ENCODE measurements at regions of chr6 and their contacts with region 1.

Region 1: GRCh38 chr6:26196846-26197648 is 109.8 kb downstream of the HFE start:
- DNase-seq: peak; percentile 93
- ATAC-seq: peak; percentile 66
- H3K4me3 ChIP-seq: peak overlapping the region; percentile 81 to 90 (median 87)
- H3K27ac ChIP-seq: peak overlapping the region; percentile 94
- H3K4me1 ChIP-seq: peaks cover 30% of the 10 kb centered on the region
- H3K27me3 ChIP-seq: no peaks in the 10 kb centered on the region; a peak in 1 of 5 replicates
- CTCF ChIP-seq: peak; percentile 60
- EP300 ChIP-seq: peak; percentile 34 to 41; a peak in 2 of 4 replicates
- POLR2A ChIP-seq: peak; percentile 99
- RAD21 ChIP-seq: peak; percentile 53

Region 2: GRCh38 chr6:26045065-26045927 is 151.8 kb before region 1 on chr6:
- CTCF ChIA-PET with region 1: no interaction called
- POLR2A ChIA-PET with region 1: interaction called, 110 read pairs
- in situ Hi-C with region 1: no loop called
- intact Hi-C with region 1: no loop called
- DNase-seq: peak; percentile 99
- ATAC-seq: peak; percentile 74
- H3K4me3 ChIP-seq: peak overlapping the region; percentile 58 to 73 (median 63)
- H3K27ac ChIP-seq: peak overlapping the region; percentile 94
- H3K4me1 ChIP-seq: peaks cover 31% of the 10 kb centered on the region
- H3K27me3 ChIP-seq: no peaks in the 10 kb centered on the region; a peak in 1 of 5 replicates
- CTCF ChIP-seq: peak; percentile 62
- EP300 ChIP-seq: peak in 1 of 2 experiments; percentile 44; a peak in 2 of 4 replicates
- POLR2A ChIP-seq: peak; percentile 98 to 100
- RAD21 ChIP-seq: peak; percentile 69

Region 3: DNA sequence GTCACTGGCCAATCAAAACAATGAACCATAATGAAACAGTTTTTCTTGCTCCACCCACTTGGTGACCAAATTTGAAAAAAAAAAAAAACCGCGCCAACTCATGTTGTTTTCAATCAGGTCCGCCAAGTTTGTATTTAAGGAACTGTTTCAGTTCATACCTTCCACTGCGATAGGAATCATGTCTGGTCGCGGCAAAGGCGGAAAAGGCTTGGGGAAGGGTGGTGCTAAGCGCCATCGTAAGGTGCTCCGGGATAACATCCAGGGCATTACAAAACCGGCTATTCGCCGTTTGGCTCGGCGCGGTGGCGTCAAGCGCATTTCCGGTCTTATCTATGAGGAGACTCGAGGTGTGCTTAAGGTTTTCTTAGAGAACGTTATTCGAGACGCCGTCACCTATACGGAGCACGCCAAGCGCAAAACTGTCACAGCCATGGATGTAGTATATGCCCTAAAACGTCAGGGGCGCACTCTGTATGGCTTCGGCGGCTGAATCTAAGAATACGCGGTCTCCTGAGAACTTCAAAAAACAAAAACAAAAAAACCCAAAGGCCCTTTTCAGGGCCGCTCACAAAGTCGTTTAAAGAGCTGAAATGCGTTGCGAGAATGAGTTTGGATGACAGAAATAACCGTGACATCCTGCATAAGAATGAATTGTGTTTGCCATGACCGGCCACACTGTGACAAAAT is 93.1 kb before region 1 on chr6:
- CTCF ChIA-PET with region 1: no interaction called
- POLR2A ChIA-PET with region 1: interaction called, 51 read pairs
- in situ Hi-C with region 1: no loop called
- intact Hi-C with region 1: loop called (anchors 5 kb)
- DNase-seq: peak; percentile 96
- ATAC-seq: peak; percentile 84
- H3K4me3 ChIP-seq: peak overlapping the region; percentile 64 to 79 (median 74)
- H3K27ac ChIP-seq: peak overlapping the region; percentile 92
- H3K4me1 ChIP-seq: peaks cover 29% of the 10 kb centered on the region
- H3K27me3 ChIP-seq: no peaks in the 10 kb centered on the region; a peak in 1 of 5 replicates
- CTCF ChIP-seq: peak; percentile 45
- EP300 ChIP-seq: peak; percentile 69 to 96; a peak in 3 of 4 replicates
- POLR2A ChIP-seq: peak; percentile 98 to 99
- RAD21 ChIP-seq: peak; percentile 52; the same call in 1 of the 2 replicates

Region 4: DNA sequence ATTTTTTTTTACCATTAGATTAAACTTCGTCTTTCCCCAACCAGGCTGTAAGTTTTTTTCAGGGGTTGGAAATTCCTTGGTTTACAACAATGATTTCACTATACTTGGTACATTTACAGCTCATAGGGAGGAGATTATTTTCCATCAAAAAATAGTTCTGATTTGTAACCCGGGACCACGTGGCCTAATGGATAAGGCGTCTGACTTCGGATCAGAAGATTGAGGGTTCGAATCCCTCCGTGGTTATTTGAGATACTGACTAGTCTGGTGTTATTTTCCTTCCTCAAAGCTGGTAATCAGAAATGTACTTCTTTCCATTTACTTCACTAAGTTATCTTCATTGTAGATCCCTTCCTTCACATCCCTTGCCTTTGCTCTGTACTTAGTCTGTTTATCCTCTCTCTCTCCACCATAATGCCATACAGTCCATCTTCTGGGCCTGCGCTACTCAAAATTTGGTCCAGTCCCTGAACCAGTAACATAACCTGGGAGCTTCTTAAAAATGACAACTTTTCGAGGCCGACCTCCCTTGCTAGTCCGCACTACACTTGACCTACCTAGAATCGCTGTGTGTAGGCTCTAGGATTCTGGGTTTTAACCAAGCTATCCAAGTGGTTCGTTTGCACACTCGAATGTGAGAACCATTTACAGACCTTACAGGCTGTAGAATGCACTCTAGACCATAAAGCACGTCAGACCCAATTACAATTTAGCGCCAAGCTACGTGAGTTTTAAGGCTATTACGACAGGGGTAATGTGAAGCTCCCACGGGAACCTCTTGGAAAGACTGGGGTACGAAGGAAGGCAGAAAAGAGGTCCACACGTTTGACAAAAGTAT is 125.8 kb after region 1 on chr6:
- CTCF ChIA-PET with region 1: no interaction called
- POLR2A ChIA-PET with region 1: interaction called, 20 read pairs
- in situ Hi-C with region 1: no loop called
- intact Hi-C with region 1: loop called (anchors 5 kb)
- DNase-seq: peak; percentile 93
- ATAC-seq: peak; percentile 64
- H3K4me3 ChIP-seq: peak overlapping the region; percentile 61 to 89 (median 78)
- H3K27ac ChIP-seq: peak overlapping the region; percentile 76
- H3K4me1 ChIP-seq: peaks cover 65% of the 10 kb centered on the region
- H3K27me3 ChIP-seq: no peaks in the 10 kb centered on the region; a peak in 1 of 5 replicates
- CTCF ChIP-seq: no peak
- EP300 ChIP-seq: no peak
- POLR2A ChIP-seq: no peak
- RAD21 ChIP-seq: no peak

Region 5: GRCh38 chr6:27838058-27838944 is 1641.3 kb after region 1 on chr6:
- CTCF ChIA-PET with region 1: no interaction called
- POLR2A ChIA-PET with region 1: interaction called, 12 read pairs
- in situ Hi-C with region 1: loop called (anchors 10 kb)
- intact Hi-C with region 1: loop called (anchors 10 kb)
- DNase-seq: peak; percentile 100
- ATAC-seq: peak; percentile 87
- H3K4me3 ChIP-seq: peak overlapping the region; percentile 79 to 84 (median 83)
- H3K27ac ChIP-seq: peak overlapping the region; percentile 92
- H3K4me1 ChIP-seq: peaks cover 34% of the 10 kb centered on the region
- H3K27me3 ChIP-seq: no peaks in the 10 kb centered on the region; a peak in 1 of 5 replicates
- CTCF ChIP-seq: no peak
- EP300 ChIP-seq: 0 out of 4 replicates have a peak, but pooled peaks of 1 of the 2 experiments have one; percentile 6
- POLR2A ChIP-seq: peak; percentile 82 to 99
- RAD21 ChIP-seq: no peak; the same call in 1 of the 2 replicates

Measured in HepG2 (cell line).